ENCODE measurements at regions of chr13 and their contacts with region 1.

Region 1: DNA sequence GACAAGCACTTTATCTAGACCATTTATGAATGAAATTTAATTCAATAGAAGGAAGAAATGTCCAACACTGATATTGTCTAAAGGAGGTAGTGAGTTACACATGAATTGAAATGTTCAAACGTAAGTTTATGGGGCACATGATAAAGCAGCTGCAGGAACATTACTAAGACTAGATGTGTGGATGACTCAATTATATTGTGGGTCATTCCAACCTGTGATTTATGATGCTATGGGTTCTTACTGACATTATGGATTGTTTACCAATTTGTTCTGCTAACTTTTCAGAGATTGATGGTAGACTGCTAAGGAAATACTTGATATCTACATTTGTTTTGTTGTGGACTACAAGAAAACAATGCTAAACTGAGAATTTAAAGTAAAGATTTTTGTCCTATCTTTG is 56.1 kb upstream of the ATXN8OS start:
- DNase-seq: no peak
- H3K4me3 ChIP-seq: no peak overlapping the region
- H3K27ac ChIP-seq: no peak overlapping the region
- H3K4me1 ChIP-seq: no peaks in the 10 kb centered on the region
- H3K27me3 ChIP-seq: no peaks in the 10 kb centered on the region
- CTCF ChIP-seq: no peak
- EP300 ChIP-seq: no peak
- POLR2A ChIP-seq: no peak

Region 2: GRCh38 chr13:69904784-69905183 is 146.7 kb before region 1 on chr13:
- in situ Hi-C with region 1: no loop called
- intact Hi-C with region 1: loop called (anchors 5 kb)
- DNase-seq: no peak
- H3K4me3 ChIP-seq: no peak overlapping the region
- H3K27ac ChIP-seq: no peak overlapping the region
- H3K4me1 ChIP-seq: no peaks in the 10 kb centered on the region
- H3K27me3 ChIP-seq: no peaks in the 10 kb centered on the region
- CTCF ChIP-seq: no peak
- EP300 ChIP-seq: no peak
- POLR2A ChIP-seq: no peak

Measured in transverse colon (tissue), 4 donors.